Calu3 (cell line): ENCODE measurements at regions of chr5 and their contacts with region 1.

Region 1: DNA sequence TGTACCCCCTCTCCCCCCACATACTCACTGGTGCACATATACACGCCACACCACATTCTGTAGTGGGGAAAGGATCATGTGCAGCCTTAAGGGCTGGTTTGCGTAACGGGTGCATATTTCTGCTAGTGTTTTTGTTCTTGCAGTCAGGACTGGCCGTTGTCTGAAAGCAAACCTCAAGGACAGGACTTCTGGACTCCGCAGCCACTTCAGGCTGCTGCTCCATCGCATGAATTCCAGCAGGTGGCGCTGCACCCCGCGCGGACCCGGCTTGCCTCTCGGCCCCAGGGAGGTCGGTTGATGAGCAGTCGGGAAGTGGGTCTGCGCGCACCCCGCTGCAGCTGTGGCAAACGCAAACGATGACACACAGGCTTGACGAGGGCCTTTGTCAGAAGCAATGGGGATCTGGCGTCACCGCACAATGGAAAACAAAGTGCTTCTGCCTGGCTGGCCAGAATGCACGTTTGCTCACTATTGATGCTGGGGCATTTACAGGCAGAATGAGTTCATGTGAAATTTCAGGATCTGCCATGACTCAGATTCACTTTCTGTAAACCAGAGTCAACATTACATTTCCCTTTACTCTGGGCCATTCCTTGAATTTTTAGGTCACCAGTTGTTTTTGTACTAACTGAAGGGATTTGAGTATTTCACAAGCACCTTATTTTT is 36.3 kb upstream of the GLRX start:
- DNase-seq: peak; percentile 95
- H3K4me3 Mint-ChIP-seq: peak overlapping the region; percentile 63
- H3K27ac Mint-ChIP-seq: peak overlapping the region; percentile 80
- H3K4me1 Mint-ChIP-seq: peaks cover 48% of the 10 kb centered on the region
- H3K27me3 Mint-ChIP-seq: no peaks in the 10 kb centered on the region
- CTCF ChIP-seq: peak; percentile 98

Region 2: GRCh38 chr5:95794070-95794516 is 64.7 kb before region 1 on chr5:
- CTCF ChIA-PET with region 1: no interaction called
- intact Hi-C with region 1: no loop called
- DNase-seq: no peak
- H3K4me3 Mint-ChIP-seq: no peak overlapping the region
- H3K27ac Mint-ChIP-seq: no peak overlapping the region
- H3K4me1 Mint-ChIP-seq: peaks cover 16% of the 10 kb centered on the region
- H3K27me3 Mint-ChIP-seq: no peaks in the 10 kb centered on the region
- CTCF ChIP-seq: no peak

Region 3: GRCh38 chr5:96434201-96434645 is 575.4 kb after region 1 on chr5:
- CTCF ChIA-PET with region 1: no interaction called
- intact Hi-C with region 1: loop called (anchors 10 kb)
- DNase-seq: peak; percentile 60
- H3K4me3 Mint-ChIP-seq: no peak overlapping the region
- H3K27ac Mint-ChIP-seq: no peak overlapping the region
- H3K4me1 Mint-ChIP-seq: no peaks in the 10 kb centered on the region
- H3K27me3 Mint-ChIP-seq: peaks cover 82% of the 10 kb centered on the region
- CTCF ChIP-seq: no peak

Region 4: GRCh38 chr5:96601811-96602244 is 743.0 kb after region 1 on chr5:
- CTCF ChIA-PET with region 1: no interaction called
- intact Hi-C with region 1: loop called (anchors 1 kb)
- DNase-seq: peak; percentile 79
- H3K4me3 Mint-ChIP-seq: no peak overlapping the region
- H3K27ac Mint-ChIP-seq: no peak overlapping the region
- H3K4me1 Mint-ChIP-seq: no peaks in the 10 kb centered on the region
- H3K27me3 Mint-ChIP-seq: peaks cover 14% of the 10 kb centered on the region
- CTCF ChIP-seq: peak; percentile 73